ENCODE measurements at regions of chr12 and their contacts with region 1.

Region 1: DNA sequence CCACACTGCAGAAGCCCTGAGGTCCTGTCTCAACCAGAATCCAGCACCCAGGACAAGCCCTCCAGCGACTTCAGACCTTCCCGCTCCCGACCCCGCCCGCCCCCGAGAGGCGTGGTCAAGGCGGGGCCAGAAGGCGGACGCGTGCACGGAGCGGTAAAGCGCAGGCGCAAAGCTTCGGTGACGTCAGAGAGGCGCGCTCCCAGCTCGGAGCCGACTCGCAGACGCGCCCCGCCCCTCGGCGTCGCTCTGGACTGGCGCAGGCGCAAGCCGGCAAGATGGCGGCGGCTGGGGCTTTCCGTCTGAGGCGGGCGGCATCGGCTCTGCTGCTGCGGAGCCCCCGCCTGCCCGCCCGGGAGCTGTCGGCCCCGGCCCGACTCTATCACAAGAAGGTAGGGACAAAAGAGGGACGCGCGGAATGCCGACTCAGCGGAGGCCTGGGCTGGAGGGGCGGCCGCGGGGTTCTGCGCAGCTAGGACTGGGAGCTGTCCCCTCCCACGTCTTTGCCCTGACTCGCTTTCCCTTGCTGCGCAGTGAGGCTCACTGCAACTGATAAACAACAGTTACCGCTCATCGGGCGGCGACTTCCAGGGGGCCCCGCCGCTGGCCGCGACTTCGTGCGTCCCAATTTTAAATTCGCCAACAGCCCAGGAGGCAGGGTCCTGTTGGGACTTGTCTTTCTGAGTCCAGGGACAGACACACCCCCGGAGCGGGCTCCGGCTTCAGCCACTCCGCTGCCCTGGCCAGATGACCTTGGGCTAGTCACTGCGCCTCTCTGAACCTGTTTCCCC is at the start of gene ISCU:
- DNase-seq: peak; percentile 98
- ATAC-seq: peak; percentile 87
- H3K4me3 Mint-ChIP-seq: peak within 1 kb of the TSS; percentile 100
- H3K27ac Mint-ChIP-seq: peak within 1 kb of the TSS; percentile 100
- H3K4me1 Mint-ChIP-seq: peaks cover 26% of the 10 kb centered on the region
- H3K27me3 Mint-ChIP-seq: no peaks in the 10 kb centered on the region
- CTCF ChIP-seq: no peak
- total RNA-seq, gene ISCU: 73.8 to 85.9 TPM (median 74.2 TPM) in 3 replicates

Region 2: GRCh38 chr12:108240027-108240785 is 322.3 kb before region 1 on chr12:
- CTCF ChIA-PET with region 1: no interaction called
- POLR2A ChIA-PET with region 1: interaction called, 12 read pairs
- DNase-seq: peak; percentile 28
- ATAC-seq: peak; percentile 40
- H3K4me3 Mint-ChIP-seq: no peak overlapping the region
- H3K27ac Mint-ChIP-seq: no peak overlapping the region
- H3K4me1 Mint-ChIP-seq: peaks cover 21% of the 10 kb centered on the region
- H3K27me3 Mint-ChIP-seq: no peaks in the 10 kb centered on the region; the same call in 1 of the 2 replicates
- CTCF ChIP-seq: no peak